ENCODE measurements at regions of chr9 and their contacts with region 1.

Region 1: GRCh38 chr9:71683598-71684235 is 84.6 kb downstream of the CEMIP2 start:
- DNase-seq: peak; percentile 25 to 51 (median 32)
- H3K4me3 ChIP-seq: no peak overlapping the region
- H3K27ac ChIP-seq: no peak overlapping the region
- H3K4me1 ChIP-seq: no peaks in the 10 kb centered on the region
- H3K27me3 ChIP-seq: no peaks in the 10 kb centered on the region
- CTCF ChIP-seq: peak in 1 of 3 donors; percentile 36
- EP300 ChIP-seq: no peak
- POLR2A ChIP-seq: no peak

Region 2: DNA sequence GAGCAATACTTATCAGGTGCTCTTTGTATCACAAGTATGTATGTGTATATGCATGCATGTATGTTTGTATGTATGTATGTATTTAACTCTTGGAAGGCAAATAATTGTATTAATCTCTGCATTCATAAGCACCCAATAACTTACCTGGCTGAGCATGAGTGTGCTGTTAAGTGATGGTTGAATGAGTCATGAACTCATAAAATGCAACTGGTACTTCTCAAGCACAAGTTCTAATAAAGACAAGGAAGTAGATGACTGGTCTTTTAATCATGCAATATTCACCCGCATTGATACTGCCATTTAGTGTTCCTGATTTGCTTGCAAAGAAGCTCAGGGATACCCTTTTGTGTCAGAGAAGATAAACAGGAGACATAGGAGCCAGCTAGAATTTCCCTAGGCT is 357.4 kb before region 1 on chr9:
- intact Hi-C with region 1: no loop called
- DNase-seq: no peak
- H3K4me3 ChIP-seq: no peak overlapping the region
- H3K27ac ChIP-seq: no peak overlapping the region
- H3K4me1 ChIP-seq: no peaks in the 10 kb centered on the region
- H3K27me3 ChIP-seq: no peaks in the 10 kb centered on the region
- CTCF ChIP-seq: no peak
- EP300 ChIP-seq: no peak
- POLR2A ChIP-seq: no peak

Region 3: DNA sequence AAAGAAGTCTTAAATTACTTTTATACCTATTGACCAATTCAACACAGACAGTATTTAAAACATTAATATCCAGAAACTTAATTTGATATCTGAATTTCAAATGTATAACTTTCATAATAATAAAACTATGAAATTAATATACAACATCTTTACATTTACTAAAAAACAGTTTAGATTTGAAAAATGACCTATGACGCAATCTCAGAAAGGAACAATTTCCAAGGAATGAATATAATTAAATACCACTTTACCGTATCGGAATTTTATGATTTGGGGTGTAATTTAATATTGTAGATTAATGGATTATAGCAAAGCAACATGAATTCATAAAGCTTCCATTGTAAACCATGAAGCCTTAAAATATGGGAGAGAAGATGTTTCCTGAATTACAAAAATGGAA is 240.8 kb before region 1 on chr9:
- intact Hi-C with region 1: no loop called
- DNase-seq: no peak
- H3K4me3 ChIP-seq: no peak overlapping the region
- H3K27ac ChIP-seq: no peak overlapping the region
- H3K4me1 ChIP-seq: peaks cover 7% of the 10 kb centered on the region
- H3K27me3 ChIP-seq: peaks cover 3% of the 10 kb centered on the region
- CTCF ChIP-seq: no peak
- EP300 ChIP-seq: no peak
- POLR2A ChIP-seq: no peak

Region 4: DNA sequence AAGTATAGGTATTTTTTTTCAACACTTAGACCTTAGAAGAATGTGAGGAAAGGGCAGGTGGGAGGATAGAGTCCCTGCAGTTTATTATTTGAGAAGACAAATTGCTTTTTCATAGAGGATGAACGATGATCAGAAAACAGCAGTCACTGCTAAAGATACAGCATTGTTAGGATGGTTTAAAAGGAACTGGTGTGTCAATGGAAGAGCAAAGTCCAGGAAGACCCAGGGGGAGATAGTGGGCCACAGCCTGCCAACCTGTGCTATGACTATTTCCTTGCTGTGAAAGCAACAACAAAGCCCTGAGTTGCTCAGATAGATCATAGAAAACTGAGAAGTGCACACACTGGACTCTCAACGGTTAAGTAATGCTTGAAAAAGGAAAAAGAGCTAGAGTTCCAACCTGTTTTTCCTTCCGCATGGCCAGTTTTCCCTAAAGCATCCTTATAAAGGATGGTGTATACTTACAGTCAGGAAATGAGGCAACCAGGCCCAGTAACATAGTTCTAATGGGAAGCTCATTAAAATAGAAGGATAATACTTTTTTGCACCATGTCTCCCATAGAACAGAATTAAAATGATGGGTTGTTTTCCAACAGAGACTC is 69.2 kb before region 1 on chr9:
- intact Hi-C with region 1: loop called in 1 of 4 experiments (anchors 10 kb)
- DNase-seq: no peak
- H3K4me3 ChIP-seq: no peak overlapping the region
- H3K27ac ChIP-seq: no peak overlapping the region
- H3K4me1 ChIP-seq: no peaks in the 10 kb centered on the region
- H3K27me3 ChIP-seq: no peaks in the 10 kb centered on the region
- CTCF ChIP-seq: no peak
- EP300 ChIP-seq: no peak
- POLR2A ChIP-seq: no peak